ENCODE measurements at regions of chr17 and their contacts with region 1.

Region 1: GRCh38 chr17:27532269-27533263 is 76.3 kb downstream of the KSR1 start:
- DNase-seq: no peak

Region 2: DNA sequence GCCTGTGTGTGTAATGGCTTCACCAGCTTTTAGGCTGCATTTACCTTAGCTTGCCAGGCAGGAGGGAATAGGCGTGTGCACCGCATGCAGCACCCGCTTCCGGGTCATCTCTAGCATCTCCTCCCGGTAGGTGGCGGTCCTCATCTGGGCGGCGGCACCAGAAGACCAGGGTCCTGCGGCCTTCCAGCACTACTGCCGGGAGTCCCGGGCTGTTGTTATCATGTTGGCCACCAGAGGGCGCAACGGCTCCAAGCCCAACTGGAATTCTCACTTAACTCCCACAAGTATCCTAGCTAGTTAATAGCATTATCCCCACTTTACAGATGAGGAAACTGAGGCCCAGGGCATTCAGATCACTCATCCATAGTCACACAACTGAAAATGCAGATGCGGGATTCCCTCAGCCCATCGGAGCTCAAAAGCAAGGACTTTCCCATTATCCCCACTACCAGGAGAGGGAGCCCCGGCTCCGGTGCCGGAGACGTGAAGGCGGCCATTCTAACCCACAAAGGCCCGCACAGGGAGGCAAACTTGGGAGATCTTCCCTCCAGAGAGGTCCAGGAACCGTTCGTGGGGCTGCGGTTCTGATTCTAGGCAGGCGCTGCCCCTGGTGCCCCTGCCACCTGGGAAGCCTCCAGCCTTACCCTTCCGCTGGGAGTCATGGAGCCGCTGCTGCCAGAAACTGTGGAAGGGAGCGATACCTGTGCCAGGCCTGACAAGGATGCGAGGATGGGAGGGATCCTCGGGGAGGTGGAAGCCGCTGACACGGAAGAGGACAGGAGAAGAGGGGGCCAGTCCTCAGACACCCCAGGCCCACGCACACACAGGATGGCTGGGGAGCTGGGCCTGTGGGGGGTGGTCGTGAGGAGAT is 122.3 kb after region 1 on chr17:
- intact Hi-C with region 1: no loop called
- DNase-seq: peak; percentile 92

Region 3: DNA sequence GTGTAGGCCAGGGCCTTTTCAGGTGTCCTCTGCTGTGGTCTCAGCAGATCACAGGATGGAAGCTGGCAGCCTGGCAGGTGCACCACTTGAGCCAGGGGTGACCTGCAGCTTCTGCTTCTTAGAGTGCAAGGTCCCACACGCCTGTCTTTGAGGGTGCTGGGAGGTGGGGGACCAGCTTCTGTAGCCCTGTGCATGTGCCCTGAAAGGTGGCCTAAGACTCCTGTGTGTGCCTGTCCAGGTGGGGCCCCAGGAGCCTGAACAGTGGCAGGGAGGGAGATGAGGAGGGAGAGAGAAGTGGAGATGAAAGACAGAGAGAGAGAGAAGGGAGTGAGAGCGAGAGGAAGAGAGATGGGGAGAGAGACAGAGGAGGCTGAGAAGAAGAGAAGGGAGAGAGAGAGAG is 144.6 kb after region 1 on chr17:
- intact Hi-C with region 1: no loop called
- DNase-seq: no peak

Region 4: GRCh38 chr17:28657756-28658155 is 1125.2 kb after region 1 on chr17:
- intact Hi-C with region 1: loop called in 1 of 2 experiments (anchors 10 kb)
- DNase-seq: no peak